ENCODE measurements at regions of chr2 and their contacts with region 1.

Region 1: DNA sequence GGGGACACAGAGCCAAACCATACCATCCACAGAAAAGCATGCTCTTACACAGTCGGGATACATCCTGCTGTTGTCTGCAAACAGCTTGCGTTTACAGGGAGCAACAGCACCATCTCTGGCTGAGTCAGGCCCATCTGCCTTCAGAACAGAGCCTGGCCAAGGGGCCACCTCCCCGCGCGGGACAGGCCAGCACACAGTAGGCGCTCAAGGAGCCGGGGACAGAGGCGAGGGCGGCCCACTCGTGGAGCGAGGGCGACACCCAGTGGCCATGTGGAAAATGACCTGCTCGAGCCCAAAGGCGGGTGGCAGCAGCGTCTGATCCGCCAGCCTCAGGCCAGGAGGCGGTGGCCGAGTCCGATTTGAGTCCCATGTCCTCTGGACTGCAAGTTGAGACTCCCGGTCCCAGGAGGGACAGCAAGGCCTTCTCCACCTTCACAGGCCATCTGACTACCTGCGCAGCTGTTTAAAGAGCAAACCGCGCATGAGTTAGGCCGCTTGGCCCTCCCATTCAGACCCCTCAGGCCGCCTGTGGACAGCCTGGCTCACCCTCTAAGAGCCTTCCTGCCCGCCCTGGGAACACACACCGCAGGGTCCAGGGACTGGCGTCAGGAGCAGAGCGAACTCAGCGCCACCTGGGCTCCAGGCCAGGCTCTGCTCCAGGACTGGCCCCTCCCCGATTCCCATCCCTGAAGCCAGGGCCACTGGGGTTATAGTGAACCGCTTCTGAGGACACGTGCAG is 38.3 kb downstream of the TTC32 start:
- DNase-seq: peak; percentile 23
- ATAC-seq: peak; percentile 94
- H3K4me3 ChIP-seq: no peak overlapping the region
- H3K27ac ChIP-seq: no peak overlapping the region
- H3K4me1 ChIP-seq: peaks cover 0 to 8% of the 10 kb centered on the region in 2 experiments; a peak in 1 of 4 replicates
- H3K27me3 ChIP-seq: no peaks in the 10 kb centered on the region
- CTCF ChIP-seq: peak; percentile 78 to 96 (median 93)
- POLR2A ChIP-seq: no peak
- RAD21 ChIP-seq: peak; percentile 100

Region 2: DNA sequence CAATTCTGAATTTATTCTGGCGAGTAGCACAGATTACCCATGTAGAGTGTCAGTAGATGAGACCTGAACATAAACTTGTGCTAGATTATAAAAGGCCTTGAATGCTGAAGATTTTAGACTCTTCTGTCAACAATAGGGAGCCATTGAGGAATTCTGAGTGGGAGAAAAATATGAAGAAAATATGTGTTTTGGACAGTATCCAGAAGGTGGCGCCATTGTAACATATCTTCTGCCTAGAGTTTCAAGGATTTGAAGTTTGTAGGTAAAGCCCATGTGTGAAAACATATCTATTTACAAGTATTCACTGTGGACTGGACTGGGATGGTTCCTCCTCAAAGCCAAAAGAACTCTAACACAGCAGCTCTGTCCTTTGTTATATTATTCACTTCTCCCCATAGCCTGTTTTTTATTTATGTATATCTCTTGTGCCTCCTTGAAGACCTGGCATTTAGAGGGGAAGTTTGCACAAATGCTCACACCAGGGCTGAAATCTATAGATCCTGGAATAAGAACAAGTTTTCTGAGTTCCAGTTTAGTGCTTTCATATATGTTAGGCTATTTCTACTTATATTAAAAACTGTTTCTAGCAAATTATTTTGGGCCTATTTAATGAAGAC is 1427.9 kb before region 1 on chr2:
- CTCF ChIA-PET with region 1: no interaction called
- POLR2A ChIA-PET with region 1: no interaction called
- RAD21 ChIA-PET with region 1: no interaction called
- intact Hi-C with region 1: loop called (anchors 5 kb)
- DNase-seq: peak; percentile 52
- ATAC-seq: peak; percentile 76
- H3K4me3 ChIP-seq: no peak overlapping the region
- H3K27ac ChIP-seq: no peak overlapping the region
- H3K4me1 ChIP-seq: no peaks in the 10 kb centered on the region
- H3K27me3 ChIP-seq: peaks cover 30% of the 10 kb centered on the region; the same call in 1 of the 2 replicates
- CTCF ChIP-seq: peak; percentile 38 to 71 (median 54); a peak in 5 of 6 replicates
- POLR2A ChIP-seq: no peak
- RAD21 ChIP-seq: peak; percentile 77

Region 3: DNA sequence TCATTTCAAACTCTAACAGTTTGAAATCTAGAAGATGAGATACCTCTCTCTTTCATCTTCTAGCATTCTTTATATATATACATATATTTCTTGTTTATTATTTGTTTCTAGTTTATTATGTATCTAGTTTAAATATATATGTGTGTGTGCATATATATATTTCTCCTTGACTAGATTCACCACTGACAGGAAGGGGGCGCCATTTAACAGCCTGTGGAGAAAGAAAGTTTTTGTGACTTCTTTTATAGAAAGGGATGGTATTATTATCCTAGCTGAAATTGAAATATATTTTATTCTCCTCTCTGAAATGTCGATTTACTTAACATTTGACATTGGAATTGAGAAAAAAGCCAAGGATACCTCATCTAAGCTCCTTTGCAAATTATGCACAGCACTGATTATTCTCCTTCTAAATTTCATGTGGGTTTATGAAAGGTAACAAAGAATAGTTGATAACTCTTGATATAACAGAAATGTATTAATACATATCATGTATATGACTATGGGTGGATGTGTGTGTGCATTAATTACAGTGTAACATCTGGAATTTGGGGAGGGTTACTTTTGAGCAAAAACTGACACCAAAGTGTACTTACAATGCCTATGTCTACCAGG is 1113.5 kb before region 1 on chr2:
- CTCF ChIA-PET with region 1: no interaction called
- POLR2A ChIA-PET with region 1: no interaction called
- RAD21 ChIA-PET with region 1: no interaction called
- intact Hi-C with region 1: loop called (anchors 1 kb)
- DNase-seq: peak; percentile 12
- ATAC-seq: peak; percentile 53; the same call in 1 of the 2 replicates
- H3K4me3 ChIP-seq: no peak overlapping the region
- H3K27ac ChIP-seq: no peak overlapping the region
- H3K4me1 ChIP-seq: no peaks in the 10 kb centered on the region
- H3K27me3 ChIP-seq: peaks cover 5% of the 10 kb centered on the region; the same call in 1 of the 2 replicates
- CTCF ChIP-seq: peak; percentile 67 to 75 (median 74); a peak in 5 of 6 replicates
- POLR2A ChIP-seq: no peak
- RAD21 ChIP-seq: peak; percentile 88

Region 4: DNA sequence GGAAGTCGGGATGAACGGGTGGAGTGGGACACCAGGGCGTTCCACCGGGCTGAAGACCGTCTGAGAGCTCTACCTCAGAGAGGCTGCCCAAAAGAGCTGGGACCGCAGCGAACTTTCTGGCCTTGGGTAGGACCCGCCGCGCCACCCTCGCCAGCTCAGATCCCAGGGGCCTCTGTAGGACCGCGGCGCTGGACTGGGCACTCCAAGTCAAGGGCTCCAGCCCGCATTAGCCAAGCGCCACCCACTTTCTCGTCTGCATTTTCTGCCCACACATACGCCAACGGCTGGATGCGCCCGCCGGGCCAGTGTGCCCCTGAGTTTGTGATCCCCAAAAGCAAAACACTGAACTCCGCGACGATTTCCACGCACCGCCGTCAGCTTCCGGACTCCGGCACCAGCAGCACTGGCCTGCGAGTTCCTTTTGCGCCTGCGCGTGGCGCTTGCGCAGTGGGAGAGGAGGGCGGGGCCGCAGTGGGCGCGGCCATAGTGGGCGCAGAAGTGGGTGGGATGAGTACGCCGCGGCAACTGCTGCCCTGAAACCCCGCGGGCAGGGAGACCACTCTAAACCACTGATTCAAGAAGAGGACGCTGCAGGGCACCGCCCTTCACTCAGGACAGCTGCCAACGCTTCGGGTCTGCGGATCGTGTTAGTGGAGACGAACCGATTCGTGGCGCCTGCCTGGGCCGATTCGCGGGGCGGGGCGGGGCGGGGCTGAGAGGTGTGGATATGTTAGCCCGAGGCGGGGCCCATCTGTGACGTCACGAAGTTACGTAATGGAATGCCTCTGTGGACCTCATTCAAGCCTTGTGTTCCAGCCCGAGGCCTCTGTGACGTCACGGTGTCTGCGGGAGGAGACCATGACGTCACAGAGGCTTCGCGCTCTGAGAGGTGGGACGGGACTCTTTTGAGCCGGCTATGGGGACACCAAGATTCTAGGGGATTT is 515.6 kb before region 1 on chr2:
- CTCF ChIA-PET with region 1: no interaction called
- POLR2A ChIA-PET with region 1: no interaction called
- RAD21 ChIA-PET with region 1: no interaction called
- intact Hi-C with region 1: loop called (anchors 2 kb)
- DNase-seq: peak; percentile 95
- ATAC-seq: peak; percentile 90
- H3K4me3 ChIP-seq: peak overlapping the region; percentile 90 to 92
- H3K27ac ChIP-seq: peak overlapping the region; percentile 69
- H3K4me1 ChIP-seq: peaks cover 0 to 10% of the 10 kb centered on the region in 2 experiments; a peak in 2 of 4 replicates
- H3K27me3 ChIP-seq: no peaks in the 10 kb centered on the region
- CTCF ChIP-seq: no peak
- POLR2A ChIP-seq: peak; percentile 95
- RAD21 ChIP-seq: peak; percentile 21; the same call in 1 of the 2 replicates

Region 5: DNA sequence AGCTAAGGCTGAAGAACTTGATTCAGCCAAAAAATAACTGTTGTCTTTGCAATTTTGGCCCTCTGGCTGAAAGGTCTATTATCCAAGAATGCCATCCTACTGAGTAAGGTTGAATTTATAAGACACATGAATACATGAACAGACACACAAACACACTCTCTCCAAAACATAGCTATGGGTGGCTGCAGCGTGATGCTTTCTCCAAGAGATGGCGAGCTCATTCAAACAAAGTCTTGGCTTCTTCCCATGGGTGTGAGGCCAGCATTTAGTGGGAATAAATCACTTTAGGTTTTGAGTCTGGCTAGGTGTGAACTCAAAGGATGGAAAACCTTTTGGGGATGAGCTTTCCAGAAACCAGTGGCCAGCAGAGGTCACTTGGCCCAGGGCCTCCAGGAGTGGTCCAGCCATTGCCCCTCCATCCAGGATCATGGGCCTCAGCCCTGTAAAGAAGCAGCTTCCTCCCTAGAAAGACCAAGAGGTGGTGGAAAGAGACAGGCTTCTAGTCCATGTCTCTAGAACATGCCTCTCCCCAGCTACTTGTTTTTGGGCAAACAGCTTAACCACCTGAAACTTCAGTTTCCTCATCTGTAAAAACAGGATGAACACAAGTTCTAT is 494.0 kb before region 1 on chr2:
- CTCF ChIA-PET with region 1: interaction called, 14 read pairs
- POLR2A ChIA-PET with region 1: no interaction called
- RAD21 ChIA-PET with region 1: no interaction called
- intact Hi-C with region 1: loop called (anchors 1 kb)
- DNase-seq: peak; percentile 12
- ATAC-seq: peak; percentile 76
- H3K4me3 ChIP-seq: no peak overlapping the region
- H3K27ac ChIP-seq: no peak overlapping the region
- H3K4me1 ChIP-seq: no peaks in the 10 kb centered on the region
- H3K27me3 ChIP-seq: peaks cover 4% of the 10 kb centered on the region; the same call in 1 of the 2 replicates
- CTCF ChIP-seq: peak; percentile 40 to 79 (median 56)
- POLR2A ChIP-seq: no peak
- RAD21 ChIP-seq: peak; percentile 83

Region 6: DNA sequence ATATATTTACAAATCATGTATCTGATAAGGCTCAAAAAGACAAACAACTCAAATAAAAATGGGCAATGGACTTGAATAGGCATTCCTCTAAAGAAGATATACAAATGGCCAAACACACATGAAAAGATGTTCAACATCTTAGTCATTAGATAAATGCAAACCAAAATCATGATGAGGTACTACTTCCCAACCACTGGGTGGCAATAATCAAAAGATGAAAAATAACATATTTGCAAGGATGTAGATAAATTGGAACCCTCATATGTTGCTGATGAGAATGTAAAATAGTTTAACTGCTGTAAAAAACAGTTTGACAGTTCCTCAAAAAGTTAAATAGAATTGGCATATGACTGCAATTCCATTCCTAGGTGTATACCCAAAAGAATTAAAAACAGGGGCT is 94.0 kb before region 1 on chr2:
- CTCF ChIA-PET with region 1: interaction called, 3 read pairs
- POLR2A ChIA-PET with region 1: no interaction called
- RAD21 ChIA-PET with region 1: no interaction called
- intact Hi-C with region 1: loop called (anchors 1 kb)
- DNase-seq: no peak
- ATAC-seq: peak; percentile 47; the same call in 1 of the 2 replicates
- H3K4me3 ChIP-seq: no peak overlapping the region
- H3K27ac ChIP-seq: no peak overlapping the region
- H3K4me1 ChIP-seq: peaks cover 0 to 2% of the 10 kb centered on the region in 2 experiments; a peak in 1 of 4 replicates
- H3K27me3 ChIP-seq: no peaks in the 10 kb centered on the region
- CTCF ChIP-seq: peak; percentile 30 to 58 (median 40); a peak in 5 of 6 replicates
- POLR2A ChIP-seq: no peak
- RAD21 ChIP-seq: peak; percentile 52; the same call in 1 of the 2 replicates